ENCODE measurements at regions of chr17 and their contacts with region 1.

Region 1: DNA sequence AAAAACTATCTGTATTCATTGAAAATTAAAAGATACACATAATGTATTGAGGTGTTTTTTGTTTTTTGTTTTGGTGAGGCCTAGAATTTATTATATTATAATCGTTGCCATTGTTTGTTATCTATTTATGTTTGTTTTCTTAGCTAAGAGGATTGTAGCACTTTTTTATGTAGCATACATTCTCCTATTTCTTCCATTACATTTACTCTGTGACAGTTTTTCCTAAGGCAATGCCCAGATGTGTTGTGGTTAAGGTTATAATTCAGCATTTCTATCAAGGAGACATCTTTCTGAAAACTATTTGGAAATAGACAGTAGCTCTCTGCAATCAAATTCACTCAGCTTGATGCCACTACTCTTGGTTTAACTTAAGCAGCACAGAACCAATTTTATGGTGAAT is 161.6 kb downstream of the PPM1E start:
- DNase-seq: no peak
- ATAC-seq: no peak
- H3K4me3 ChIP-seq: no peak overlapping the region
- H3K27ac ChIP-seq: no peak overlapping the region
- H3K4me1 ChIP-seq: no peaks in the 10 kb centered on the region
- H3K27me3 ChIP-seq: no peaks in the 10 kb centered on the region; a peak in 1 of 5 replicates
- CTCF ChIP-seq: no peak
- EP300 ChIP-seq: no peak
- POLR2A ChIP-seq: no peak
- RAD21 ChIP-seq: no peak

Region 2: GRCh38 chr17:58900171-58900907 is 16.9 kb before region 1 on chr17:
- CTCF ChIA-PET with region 1: no interaction called
- POLR2A ChIA-PET with region 1: no interaction called
- in situ Hi-C with region 1: no loop called
- intact Hi-C with region 1: no loop called
- DNase-seq: no peak
- ATAC-seq: no peak
- H3K4me3 ChIP-seq: no peak overlapping the region
- H3K27ac ChIP-seq: no peak overlapping the region
- H3K4me1 ChIP-seq: no peaks in the 10 kb centered on the region
- H3K27me3 ChIP-seq: no peaks in the 10 kb centered on the region
- CTCF ChIP-seq: no peak
- EP300 ChIP-seq: no peak
- POLR2A ChIP-seq: no peak
- RAD21 ChIP-seq: no peak

Region 3: DNA sequence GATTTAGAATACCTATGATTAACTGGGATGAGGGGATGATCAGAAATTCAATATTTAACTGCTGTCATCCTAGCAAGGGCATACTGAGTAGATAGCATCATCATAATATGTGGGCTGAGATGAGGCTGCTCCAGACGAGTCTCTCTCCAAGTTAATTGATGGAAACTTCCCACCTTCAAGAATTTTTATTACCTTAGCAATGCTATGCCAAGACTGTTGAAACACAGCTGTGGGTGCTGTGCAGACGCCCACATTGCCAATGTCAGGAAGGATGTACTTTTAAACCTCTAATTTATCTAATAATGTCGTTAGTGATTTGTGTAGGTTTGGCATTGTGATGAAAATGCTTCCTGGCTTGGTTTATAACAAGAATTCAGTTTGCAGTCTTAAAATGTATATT is 19.1 kb after region 1 on chr17:
- CTCF ChIA-PET with region 1: no interaction called
- POLR2A ChIA-PET with region 1: no interaction called
- in situ Hi-C with region 1: no loop called
- intact Hi-C with region 1: loop called (anchors 2 kb)
- DNase-seq: no peak
- ATAC-seq: no peak
- H3K4me3 ChIP-seq: no peak overlapping the region
- H3K27ac ChIP-seq: no peak overlapping the region
- H3K4me1 ChIP-seq: no peaks in the 10 kb centered on the region
- H3K27me3 ChIP-seq: peaks cover 0 to 3% of the 10 kb centered on the region in 2 experiments; a peak in 1 of 5 replicates
- CTCF ChIP-seq: no peak
- EP300 ChIP-seq: no peak
- POLR2A ChIP-seq: no peak
- RAD21 ChIP-seq: no peak

Region 4: DNA sequence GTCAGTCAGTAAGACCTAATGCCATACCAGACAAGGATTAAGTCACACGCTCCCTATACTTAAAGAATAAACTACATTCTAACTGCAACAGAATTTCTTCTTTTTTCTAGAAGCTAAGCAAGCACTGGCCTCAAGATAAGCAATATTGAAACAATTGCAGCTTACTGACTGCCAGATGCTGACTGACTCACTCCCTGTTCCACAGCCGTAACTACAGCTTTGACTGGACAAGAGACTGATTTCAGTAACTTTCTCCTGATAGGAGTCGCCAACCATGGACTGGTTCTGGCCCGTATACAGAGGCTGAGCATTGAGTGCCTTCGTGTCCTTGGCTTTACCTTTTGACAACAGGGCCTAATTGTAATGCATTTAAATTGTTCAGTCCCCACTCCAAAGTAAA is 121.5 kb after region 1 on chr17:
- CTCF ChIA-PET with region 1: no interaction called
- POLR2A ChIA-PET with region 1: no interaction called
- in situ Hi-C with region 1: no loop called
- intact Hi-C with region 1: no loop called
- DNase-seq: no peak
- ATAC-seq: no peak
- H3K4me3 ChIP-seq: no peak overlapping the region
- H3K27ac ChIP-seq: no peak overlapping the region
- H3K4me1 ChIP-seq: no peaks in the 10 kb centered on the region
- H3K27me3 ChIP-seq: no peaks in the 10 kb centered on the region
- CTCF ChIP-seq: no peak
- EP300 ChIP-seq: no peak
- POLR2A ChIP-seq: no peak
- RAD21 ChIP-seq: no peak